Right ventricle myocardium inferior (tissue), 1 donor: ENCODE measurements at regions of chr1 and their contacts with region 1.

Region 1: DNA sequence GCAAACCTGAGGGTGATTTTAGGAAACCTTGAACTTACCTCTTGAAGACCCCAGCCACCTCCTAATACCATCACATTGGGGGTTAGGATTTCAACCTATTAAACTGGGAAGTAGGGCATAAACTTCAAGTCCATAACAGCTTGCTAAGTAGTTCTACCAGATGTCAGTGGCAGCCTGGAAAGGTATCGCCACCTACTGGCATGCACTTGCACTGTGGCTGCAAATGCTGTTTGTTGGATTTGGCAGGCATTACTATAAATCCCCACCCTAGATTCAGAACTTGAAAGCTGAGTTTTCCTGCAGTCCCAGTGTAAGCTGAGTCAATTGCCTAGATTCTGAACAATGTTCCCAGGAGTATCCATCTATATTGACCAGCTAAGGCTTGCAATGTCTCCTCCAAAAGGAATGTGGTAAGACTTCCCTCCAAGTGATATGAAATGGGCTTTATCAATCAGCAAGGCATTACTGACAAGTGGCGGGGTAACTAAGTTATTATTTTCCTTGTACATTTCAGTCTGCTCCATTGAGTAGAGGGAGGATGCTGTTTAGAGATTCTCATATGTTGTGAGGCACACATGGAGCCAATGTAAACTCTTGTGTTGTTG is 474.5 kb downstream of the PTPRC start:
- DNase-seq: no peak
- ATAC-seq: no peak

Region 2: GRCh38 chr1:198318085-198318484 is 795.3 kb before region 1 on chr1:
- intact Hi-C with region 1: no loop called
- DNase-seq: no peak
- ATAC-seq: no peak

Region 3: GRCh38 chr1:198771563-198772153 is 341.7 kb before region 1 on chr1:
- intact Hi-C with region 1: loop called (anchors 10 kb)
- DNase-seq: no peak
- ATAC-seq: no peak

Region 4: GRCh38 chr1:198892065-198892464 is 221.3 kb before region 1 on chr1:
- intact Hi-C with region 1: loop called (anchors 5 kb)
- DNase-seq: no peak
- ATAC-seq: no peak

Region 5: DNA sequence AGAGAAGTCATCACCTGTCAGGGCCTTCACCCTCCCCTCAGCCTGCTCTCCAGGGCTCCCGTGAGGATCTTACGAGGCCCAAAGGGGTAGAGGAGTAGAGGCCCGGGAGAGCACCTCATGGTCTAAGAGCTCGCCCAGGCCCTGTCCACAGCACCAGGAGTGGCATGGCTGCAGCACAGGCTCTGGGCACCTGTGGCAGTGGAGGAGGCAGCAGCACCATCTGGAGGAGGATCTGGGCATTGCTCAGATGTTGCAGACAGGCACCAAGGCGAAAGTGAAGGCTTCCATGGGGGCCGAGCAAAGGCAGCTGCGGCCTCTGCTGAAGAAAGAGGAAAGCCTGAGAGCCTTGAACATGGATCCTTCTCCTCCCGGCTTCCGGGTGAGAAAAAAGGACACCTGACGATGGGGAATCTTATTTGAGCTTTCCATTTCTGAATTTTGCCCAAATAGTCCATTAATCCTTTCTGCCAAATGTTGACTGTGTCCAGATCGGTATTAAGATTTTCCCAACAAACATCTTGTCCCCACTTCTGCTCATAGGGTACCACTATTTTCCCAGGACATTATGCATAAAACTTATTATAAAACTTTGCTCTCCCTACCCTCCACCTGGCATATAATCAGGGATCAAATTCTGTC is 130.2 kb after region 1 on chr1:
- intact Hi-C with region 1: loop called (anchors 10 kb)
- DNase-seq: peak; percentile 72
- ATAC-seq: peak; percentile 68